CD4-positive, alpha-beta T cell (primary cell): ENCODE measurements at regions of chr19 and their contacts with region 1.

Region 1: GRCh38 chr19:14432791-14433553 is at the start of gene PKN1:
- DNase-seq: peak in 10 of 14 experiments; percentile 18 to 70 (median 47)
- ATAC-seq: peak; percentile 3
- H3K4me3 ChIP-seq: peak within 1 kb of the TSS; percentile 85
- H3K4me3 Mint-ChIP-seq: peak within 1 kb of the TSS; percentile 90
- H3K27ac ChIP-seq: peak within 1 kb of the TSS; percentile 74 to 82
- H3K27ac Mint-ChIP-seq: peak within 1 kb of the TSS; percentile 91
- H3K4me1 ChIP-seq: peaks cover 42% of the 10 kb centered on the region
- H3K4me1 Mint-ChIP-seq: peaks cover 44% of the 10 kb centered on the region
- H3K27me3 ChIP-seq: no peaks in the 10 kb centered on the region
- H3K27me3 Mint-ChIP-seq: no peaks in the 10 kb centered on the region
- CTCF ChIP-seq: no peak
- total RNA-seq, gene PKN1: 171 TPM

Region 2: GRCh38 chr19:14472202-14472938 is 39.4 kb after region 1 on chr19:
- CTCF ChIA-PET with region 1: interaction called, 6 read pairs
- POLR2A ChIA-PET with region 1: interaction called, 7 read pairs
- intact Hi-C with region 1: loop called (anchors 1 kb)
- DNase-seq: peak; percentile 77 to 91 (median 86)
- ATAC-seq: peak; percentile 84
- H3K4me3 ChIP-seq: peak overlapping the region; percentile 34
- H3K4me3 Mint-ChIP-seq: peak overlapping the region; percentile 55
- H3K27ac ChIP-seq: no peak overlapping the region
- H3K27ac Mint-ChIP-seq: no peak overlapping the region
- H3K4me1 ChIP-seq: peaks cover 31% of the 10 kb centered on the region
- H3K4me1 Mint-ChIP-seq: peaks cover 36% of the 10 kb centered on the region
- H3K27me3 ChIP-seq: peaks cover 19 to 22% of the 10 kb centered on the region in 2 experiments
- H3K27me3 Mint-ChIP-seq: peaks cover 33% of the 10 kb centered on the region
- CTCF ChIP-seq: peak; percentile 98

Region 3: DNA sequence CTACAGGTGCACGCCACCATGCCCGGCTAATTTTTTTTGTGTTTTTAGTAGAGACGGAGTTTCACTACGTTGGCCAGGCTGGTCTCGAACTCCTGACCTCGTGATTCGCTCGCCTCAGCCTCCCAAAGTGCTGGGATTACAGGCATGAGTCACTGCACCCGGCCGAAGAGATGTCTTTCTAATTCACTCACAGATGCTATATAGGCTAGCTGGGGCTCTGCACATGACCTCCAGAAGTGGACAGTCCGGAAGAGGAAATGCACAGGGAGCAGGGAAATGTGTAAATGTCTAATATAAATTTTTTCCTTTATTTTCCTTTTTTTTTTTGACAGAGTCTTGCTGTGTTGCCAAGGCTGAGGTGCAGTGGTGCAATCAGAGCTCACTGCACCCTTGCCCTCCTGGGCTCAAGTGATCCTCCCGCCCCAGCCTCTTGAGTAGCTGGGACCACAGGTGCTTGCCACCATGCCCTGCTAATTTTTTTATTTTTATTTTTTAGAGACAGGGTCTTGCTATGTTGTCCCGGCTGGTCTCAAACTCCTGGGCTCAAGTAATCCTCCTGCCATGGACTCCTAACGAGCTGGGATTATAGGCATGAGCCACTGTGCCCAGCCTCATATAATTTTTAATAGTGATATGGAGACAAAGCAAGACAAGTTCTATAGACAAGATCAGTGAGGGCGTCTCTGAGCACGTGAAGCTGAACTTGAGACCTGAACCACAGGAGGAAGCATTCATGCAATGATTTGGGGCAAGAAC is 54.6 kb after region 1 on chr19:
- CTCF ChIA-PET with region 1: no interaction called
- POLR2A ChIA-PET with region 1: no interaction called
- intact Hi-C with region 1: loop called in 1 of 2 experiments (anchors 5 kb)
- DNase-seq: no peak
- ATAC-seq: no peak
- H3K4me3 ChIP-seq: no peak overlapping the region
- H3K4me3 Mint-ChIP-seq: no peak overlapping the region
- H3K27ac ChIP-seq: no peak overlapping the region
- H3K27ac Mint-ChIP-seq: no peak overlapping the region
- H3K4me1 ChIP-seq: peaks cover 5% of the 10 kb centered on the region
- H3K4me1 Mint-ChIP-seq: peaks cover 7% of the 10 kb centered on the region
- H3K27me3 ChIP-seq: no peaks in the 10 kb centered on the region
- H3K27me3 Mint-ChIP-seq: no peaks in the 10 kb centered on the region
- CTCF ChIP-seq: no peak